Activated CD4-positive, alpha-beta memory T cell treated with anti-CD3 and anti-CD28 coated beads for 36 hours (primary cell): ENCODE measurements at regions of chr2 and their contacts with region 1.

Region 1: DNA sequence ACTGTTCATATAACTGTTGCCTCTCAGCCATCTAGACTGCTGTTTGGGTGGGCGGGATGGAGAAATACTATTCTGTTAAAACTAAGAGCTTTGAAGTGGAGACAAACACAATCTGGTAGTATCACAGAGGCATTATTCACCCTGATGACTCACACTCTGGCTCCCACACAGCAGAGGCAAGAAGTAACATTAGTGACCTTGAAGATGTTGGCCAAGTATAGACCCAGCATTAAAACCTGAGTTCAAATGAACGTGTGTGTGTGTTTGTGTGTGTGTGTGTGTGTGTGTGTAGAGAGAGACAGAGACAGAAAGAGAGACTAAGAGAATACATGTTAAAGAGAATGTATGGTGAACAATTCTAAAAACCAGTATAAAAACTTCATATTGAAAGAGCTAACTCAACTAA is 22.5 kb upstream of the ACVR1 start:
- DNase-seq: peak; percentile 84
- H3K4me3 Mint-ChIP-seq: peak overlapping the region; percentile 82
- H3K27ac Mint-ChIP-seq: peak overlapping the region; percentile 99
- H3K4me1 Mint-ChIP-seq: peaks cover 82% of the 10 kb centered on the region
- H3K27me3 Mint-ChIP-seq: no peaks in the 10 kb centered on the region

Region 2: GRCh38 chr2:157336137-157337010 is 562.2 kb before region 1 on chr2:
- CTCF ChIA-PET with region 1: interaction called, 5 read pairs
- POLR2A ChIA-PET with region 1: no interaction called
- intact Hi-C with region 1: loop called (anchors 2 kb)
- DNase-seq: peak; percentile 43
- H3K4me3 Mint-ChIP-seq: peak overlapping the region; percentile 52
- H3K27ac Mint-ChIP-seq: peak overlapping the region; percentile 40
- H3K4me1 Mint-ChIP-seq: peaks cover 55% of the 10 kb centered on the region
- H3K27me3 Mint-ChIP-seq: no peaks in the 10 kb centered on the region

Region 3: GRCh38 chr2:157468931-157469708 is 429.5 kb before region 1 on chr2:
- CTCF ChIA-PET with region 1: no interaction called
- POLR2A ChIA-PET with region 1: no interaction called
- intact Hi-C with region 1: loop called (anchors 1 kb)
- DNase-seq: no peak
- H3K4me3 Mint-ChIP-seq: peak overlapping the region; percentile 69
- H3K27ac Mint-ChIP-seq: peak overlapping the region; percentile 99
- H3K4me1 Mint-ChIP-seq: peaks cover 91% of the 10 kb centered on the region
- H3K27me3 Mint-ChIP-seq: no peaks in the 10 kb centered on the region

Region 4: GRCh38 chr2:157777427-157777826 is 121.2 kb before region 1 on chr2:
- CTCF ChIA-PET with region 1: interaction called, 4 read pairs
- POLR2A ChIA-PET with region 1: no interaction called
- intact Hi-C with region 1: loop called (anchors 1 kb)
- DNase-seq: peak; percentile 61
- H3K4me3 Mint-ChIP-seq: no peak overlapping the region
- H3K27ac Mint-ChIP-seq: no peak overlapping the region
- H3K4me1 Mint-ChIP-seq: peaks cover 12% of the 10 kb centered on the region
- H3K27me3 Mint-ChIP-seq: no peaks in the 10 kb centered on the region

Region 5: GRCh38 chr2:157868993-157869392 is 29.6 kb before region 1 on chr2:
- CTCF ChIA-PET with region 1: interaction called, 8 read pairs
- POLR2A ChIA-PET with region 1: interaction called, 70 read pairs
- intact Hi-C with region 1: loop called (anchors 1 kb)
- DNase-seq: peak; percentile 35
- H3K4me3 Mint-ChIP-seq: no peak overlapping the region
- H3K27ac Mint-ChIP-seq: peak overlapping the region; percentile 6
- H3K4me1 Mint-ChIP-seq: peaks cover 89% of the 10 kb centered on the region
- H3K27me3 Mint-ChIP-seq: no peaks in the 10 kb centered on the region

Region 6: DNA sequence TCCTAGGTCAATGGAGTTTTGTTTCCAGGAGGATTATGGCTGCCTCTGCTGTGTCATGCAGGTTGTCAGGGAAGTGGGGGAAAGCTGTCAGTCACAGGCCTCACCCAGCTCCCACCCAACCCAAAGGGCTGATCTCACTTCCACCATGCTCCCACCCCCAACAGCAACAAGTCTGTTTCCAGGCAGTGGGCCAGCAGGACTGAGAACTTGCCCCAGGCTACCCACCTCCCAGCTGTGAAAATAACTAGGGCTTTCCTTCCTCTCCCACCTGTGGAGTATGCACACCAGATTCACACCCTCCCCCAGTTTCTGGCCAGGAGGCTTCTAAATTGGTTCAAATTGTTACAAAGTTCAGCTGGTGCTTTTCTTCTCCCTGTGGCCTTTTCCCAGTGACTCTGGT is 73.1 kb after region 1 on chr2:
- CTCF ChIA-PET with region 1: no interaction called
- POLR2A ChIA-PET with region 1: no interaction called
- intact Hi-C with region 1: no loop called
- DNase-seq: no peak
- H3K4me3 Mint-ChIP-seq: no peak overlapping the region
- H3K27ac Mint-ChIP-seq: no peak overlapping the region
- H3K4me1 Mint-ChIP-seq: no peaks in the 10 kb centered on the region
- H3K27me3 Mint-ChIP-seq: no peaks in the 10 kb centered on the region

Region 7: GRCh38 chr2:158456309-158457066 is 557.9 kb after region 1 on chr2 and contains the starts of genes CCDC148 and PKP4:
- CTCF ChIA-PET with region 1: no interaction called
- POLR2A ChIA-PET with region 1: no interaction called
- intact Hi-C with region 1: loop called (anchors 1 kb)
- DNase-seq: peak; percentile 94
- H3K4me3 Mint-ChIP-seq: peak within 1 kb of the TSS; percentile 93
- H3K27ac Mint-ChIP-seq: peak within 1 kb of the TSS; percentile 72
- H3K4me1 Mint-ChIP-seq: peaks cover 28% of the 10 kb centered on the region
- H3K27me3 Mint-ChIP-seq: no peaks in the 10 kb centered on the region
- total RNA-seq, gene CCDC148: 0.29 TPM in 1 of 2 experiments, not detected in the other
- total RNA-seq, gene PKP4: 41.4 to 43.1 TPM